Calu3 (cell line): ENCODE measurements at regions of chr5 and their contacts with region 1.

Region 1: DNA sequence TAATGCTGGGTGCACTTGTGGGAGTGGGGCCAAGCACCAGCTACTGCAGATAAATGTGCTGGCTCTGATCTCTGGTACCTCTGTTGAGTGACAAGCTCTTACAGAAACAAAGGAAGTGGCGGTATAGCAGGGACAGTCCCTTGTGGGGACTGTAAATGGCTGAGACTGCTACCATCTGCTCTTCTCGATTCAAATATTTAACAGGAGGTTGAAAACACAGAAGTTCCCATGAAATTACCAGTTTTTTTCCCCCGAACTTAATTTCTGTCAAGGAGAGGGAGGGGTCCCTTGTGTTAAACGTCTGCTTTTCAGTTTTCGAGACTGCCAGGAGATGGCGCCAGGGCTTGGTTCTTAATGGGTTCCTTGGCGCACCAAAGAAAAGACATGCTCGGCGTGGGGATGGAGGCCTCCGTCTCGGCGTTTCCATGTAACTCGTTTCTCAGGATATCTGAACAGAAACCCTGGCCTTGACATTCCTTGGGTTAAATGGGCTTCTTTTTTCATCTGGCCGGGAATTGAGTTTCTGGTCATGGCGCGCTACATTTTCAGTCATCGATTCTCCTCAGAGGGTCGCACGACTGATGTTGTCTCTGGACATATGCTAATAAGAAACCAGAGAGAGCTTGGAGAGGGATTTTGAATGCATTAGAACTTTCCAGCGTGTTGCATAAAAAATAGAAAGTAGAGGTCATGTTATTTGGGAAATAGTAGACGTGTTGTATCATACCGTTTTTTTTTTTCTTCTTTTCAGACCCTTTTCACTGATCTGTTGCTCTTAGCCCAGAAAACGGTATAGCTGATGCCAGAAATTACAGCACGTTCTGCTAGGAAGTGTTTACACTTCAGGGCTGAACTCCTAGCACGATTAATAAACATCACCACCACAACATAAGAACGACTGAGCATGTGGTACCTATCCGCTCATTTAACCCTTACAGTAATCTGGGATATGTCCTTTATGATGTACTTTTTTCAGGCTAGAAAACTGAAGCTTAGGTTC is 64.0 kb downstream of the CARTPT start:
- DNase-seq: peak; percentile 83
- H3K4me3 Mint-ChIP-seq: peak overlapping the region; percentile 34
- H3K27ac Mint-ChIP-seq: peak overlapping the region; percentile 60
- H3K4me1 Mint-ChIP-seq: peaks cover 29% of the 10 kb centered on the region
- H3K27me3 Mint-ChIP-seq: no peaks in the 10 kb centered on the region
- CTCF ChIP-seq: peak; percentile 55

Region 2: GRCh38 chr5:71922584-71923106 is 139.6 kb after region 1 on chr5:
- CTCF ChIA-PET with region 1: interaction called, 16 read pairs
- intact Hi-C with region 1: loop called (anchors 2 kb)
- DNase-seq: peak; percentile 66
- H3K4me3 Mint-ChIP-seq: peak overlapping the region; percentile 31
- H3K27ac Mint-ChIP-seq: peak overlapping the region; percentile 96
- H3K4me1 Mint-ChIP-seq: peaks cover 44% of the 10 kb centered on the region
- H3K27me3 Mint-ChIP-seq: no peaks in the 10 kb centered on the region
- CTCF ChIP-seq: no peak

Region 3: GRCh38 chr5:72018146-72018803 is 235.2 kb after region 1 on chr5:
- CTCF ChIA-PET with region 1: interaction called, 3 read pairs
- intact Hi-C with region 1: loop called (anchors 2 kb)
- DNase-seq: peak; percentile 62
- H3K4me3 Mint-ChIP-seq: no peak overlapping the region
- H3K27ac Mint-ChIP-seq: no peak overlapping the region
- H3K4me1 Mint-ChIP-seq: peaks cover 23% of the 10 kb centered on the region
- H3K27me3 Mint-ChIP-seq: no peaks in the 10 kb centered on the region
- CTCF ChIP-seq: peak; percentile 92

Region 4: GRCh38 chr5:72138943-72139521 is 356.0 kb after region 1 on chr5:
- CTCF ChIA-PET with region 1: no interaction called
- intact Hi-C with region 1: loop called (anchors 10 kb)
- DNase-seq: no peak
- H3K4me3 Mint-ChIP-seq: no peak overlapping the region
- H3K27ac Mint-ChIP-seq: no peak overlapping the region
- H3K4me1 Mint-ChIP-seq: peaks cover 5% of the 10 kb centered on the region
- H3K27me3 Mint-ChIP-seq: no peaks in the 10 kb centered on the region
- CTCF ChIP-seq: no peak

Region 5: GRCh38 chr5:72268753-72269410 is 485.8 kb after region 1 on chr5:
- CTCF ChIA-PET with region 1: no interaction called
- intact Hi-C with region 1: loop called (anchors 1 kb)
- DNase-seq: peak; percentile 71
- H3K4me3 Mint-ChIP-seq: no peak overlapping the region
- H3K27ac Mint-ChIP-seq: no peak overlapping the region
- H3K4me1 Mint-ChIP-seq: peaks cover 8% of the 10 kb centered on the region
- H3K27me3 Mint-ChIP-seq: no peaks in the 10 kb centered on the region
- CTCF ChIP-seq: peak; percentile 55

Region 6: DNA sequence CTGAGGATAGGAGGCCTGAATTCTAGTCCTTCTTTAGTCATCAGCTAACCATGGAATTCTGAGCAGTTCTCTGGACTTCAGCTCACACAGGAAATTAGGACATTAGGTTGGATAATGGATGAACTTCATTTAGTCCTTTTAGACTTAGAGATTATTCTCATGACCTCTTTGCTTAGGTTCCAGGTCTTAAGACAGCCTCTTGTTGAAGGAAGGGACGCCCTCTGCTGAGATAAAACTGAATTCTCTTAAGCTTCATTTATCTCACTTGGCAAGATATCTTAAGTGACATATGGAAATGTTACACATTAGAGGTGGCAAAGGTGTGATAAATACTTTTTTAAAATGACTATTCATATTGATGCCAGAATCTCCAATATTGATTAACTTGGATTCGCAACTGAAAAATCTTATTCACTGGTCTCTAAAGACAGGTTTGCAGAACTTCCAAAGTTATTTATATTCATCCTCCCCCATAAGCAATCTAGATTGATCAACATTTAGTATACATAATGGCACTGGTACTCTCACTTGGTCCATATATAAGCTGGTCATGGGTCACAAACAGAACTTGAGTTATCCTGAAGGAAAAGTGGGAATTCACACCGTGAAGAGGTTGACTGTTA is 741.0 kb after region 1 on chr5:
- CTCF ChIA-PET with region 1: no interaction called
- intact Hi-C with region 1: loop called (anchors 10 kb)
- DNase-seq: peak; percentile 13
- H3K4me3 Mint-ChIP-seq: no peak overlapping the region
- H3K27ac Mint-ChIP-seq: no peak overlapping the region
- H3K4me1 Mint-ChIP-seq: no peaks in the 10 kb centered on the region
- H3K27me3 Mint-ChIP-seq: no peaks in the 10 kb centered on the region
- CTCF ChIP-seq: peak; percentile 25